Pancreas (tissue), 10 donors: ENCODE measurements at regions of chr1 and their contacts with region 1.

Region 1: DNA sequence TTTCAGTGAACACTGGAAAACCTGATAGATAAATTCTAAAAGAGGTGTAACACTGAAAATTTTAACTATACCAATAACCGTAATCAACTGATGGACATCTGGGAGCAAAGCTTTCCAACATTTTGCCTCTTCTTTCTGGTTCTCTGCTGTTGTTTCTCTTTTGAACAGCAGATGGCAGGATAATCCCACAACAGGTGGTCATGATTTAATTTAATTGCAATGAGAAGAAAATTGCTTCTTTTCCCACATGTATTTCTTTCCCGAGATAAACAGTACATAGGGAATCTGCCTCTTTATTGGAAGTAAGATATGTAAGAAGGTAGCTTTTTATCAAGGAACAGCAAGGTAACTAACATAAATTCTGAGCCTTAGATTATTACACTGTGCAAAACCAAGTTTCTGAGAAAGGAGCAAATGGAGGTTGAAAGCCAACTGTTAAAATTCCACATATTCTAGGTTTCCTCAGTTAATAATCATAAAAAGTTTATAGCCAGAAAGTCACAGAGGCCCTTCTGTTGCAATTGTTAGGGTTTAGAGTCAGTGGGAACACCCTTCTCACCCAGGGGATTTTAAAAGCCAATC is 72.9 kb downstream of the RPS6KA1 start:
- DNase-seq: peak in 3 of 6 donors; percentile 25 to 55 (median 34)
- ATAC-seq: peak; percentile 60 to 88 (median 84)
- H3K4me3 ChIP-seq: no peak overlapping the region
- H3K27ac ChIP-seq: no peak overlapping the region
- H3K4me1 ChIP-seq: no peaks in the 10 kb centered on the region
- H3K27me3 ChIP-seq: no peaks in the 10 kb centered on the region
- CTCF ChIP-seq: peak; percentile 63 to 75 (median 70)

Region 2: DNA sequence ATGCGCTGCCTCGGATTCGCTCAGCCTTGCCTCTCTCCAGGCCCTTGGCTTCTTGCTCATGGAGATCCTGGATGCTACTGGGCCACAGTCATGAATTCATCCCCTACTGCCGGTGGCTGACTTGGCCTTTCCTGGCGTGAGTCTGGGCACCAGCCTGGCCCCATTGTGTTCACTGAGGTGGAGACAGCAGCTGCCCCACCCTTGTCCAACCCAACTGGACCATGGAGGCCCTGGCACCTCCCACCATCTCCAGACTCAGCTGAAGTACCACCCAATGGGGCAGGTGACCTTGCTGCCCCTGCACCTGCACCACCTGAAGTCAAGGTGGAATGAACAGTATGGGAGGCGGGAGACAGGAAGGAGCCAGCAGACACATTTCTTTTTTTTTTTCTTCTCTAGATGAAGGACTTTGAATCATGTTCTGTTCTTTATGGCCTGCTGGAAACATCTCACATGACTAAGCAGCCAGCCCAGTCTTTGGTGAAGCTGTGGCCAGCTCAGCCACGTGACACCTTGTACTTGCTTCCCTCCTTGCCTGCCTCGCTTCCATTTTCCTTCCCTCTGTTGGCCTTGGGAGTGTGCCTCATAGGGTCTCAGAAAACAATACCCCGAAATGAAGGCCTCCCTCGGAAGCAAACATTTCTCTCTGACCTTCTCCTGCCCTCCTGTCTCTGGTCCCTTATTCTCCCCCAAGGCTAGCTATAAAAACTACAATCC is 552.8 kb before region 1 on chr1:
- intact Hi-C with region 1: no loop called
- DNase-seq: no peak
- ATAC-seq: no peak
- H3K4me3 ChIP-seq: no peak overlapping the region
- H3K27ac ChIP-seq: no peak overlapping the region
- H3K4me1 ChIP-seq: peaks cover 0 to 9% (median 0%) of the 10 kb centered on the region in 3 donors
- H3K27me3 ChIP-seq: no peaks in the 10 kb centered on the region
- CTCF ChIP-seq: no peak

Region 3: DNA sequence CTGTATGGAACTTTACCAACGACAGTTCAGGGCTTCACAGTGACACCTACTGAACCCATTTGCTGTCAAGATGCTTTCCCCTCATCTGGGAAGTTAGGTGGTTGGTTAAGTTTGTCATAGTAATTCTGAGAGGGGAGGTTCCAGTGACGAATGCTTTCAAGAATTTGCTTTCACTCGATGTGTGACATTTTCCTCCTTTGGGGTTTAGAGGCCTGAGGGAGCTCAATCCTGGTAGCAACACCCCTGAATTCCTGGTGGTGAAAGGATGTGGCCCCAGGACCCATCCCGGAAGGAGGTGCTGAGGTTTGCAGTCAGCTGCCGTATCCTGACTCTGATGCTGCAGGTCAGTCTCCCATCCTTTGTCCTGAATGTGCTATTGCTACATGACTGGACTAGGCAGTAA is 188.1 kb after region 1 on chr1:
- intact Hi-C with region 1: loop called (anchors 5 to 10 kb)
- DNase-seq: no peak
- ATAC-seq: no peak
- H3K4me3 ChIP-seq: no peak overlapping the region
- H3K27ac ChIP-seq: no peak overlapping the region
- H3K4me1 ChIP-seq: peaks cover 7 to 20% (median 18%) of the 10 kb centered on the region in 3 donors
- H3K27me3 ChIP-seq: no peaks in the 10 kb centered on the region
- CTCF ChIP-seq: no peak

Region 4: GRCh38 chr1:26799479-26800142 is 197.1 kb after region 1 on chr1:
- intact Hi-C with region 1: loop called (anchors 5 to 10 kb)
- DNase-seq: no peak
- ATAC-seq: peak in 3 of 4 donors; percentile 49 to 86 (median 85)
- H3K4me3 ChIP-seq: no peak overlapping the region
- H3K27ac ChIP-seq: peak overlapping the region in 2 of 4 donors; percentile 62 to 63
- H3K4me1 ChIP-seq: no peaks in the 10 kb centered on the region
- H3K27me3 ChIP-seq: no peaks in the 10 kb centered on the region
- CTCF ChIP-seq: no peak

Region 5: GRCh38 chr1:26882696-26883463 is 280.4 kb after region 1 on chr1:
- intact Hi-C with region 1: loop called in 1 of 3 experiments (anchors 5 kb)
- DNase-seq: no peak
- ATAC-seq: no peak
- H3K4me3 ChIP-seq: no peak overlapping the region
- H3K27ac ChIP-seq: no peak overlapping the region
- H3K4me1 ChIP-seq: no peaks in the 10 kb centered on the region
- H3K27me3 ChIP-seq: no peaks in the 10 kb centered on the region
- CTCF ChIP-seq: no peak